Activated CD8-positive, alpha-beta T cell treated with anti-CD3 and anti-CD28 coated beads, Interleukin-2, amount 10 ng/mL, durations not matched to agents 7 days and 5 days (primary cell): ENCODE measurements at regions of chr1 and their contacts with region 1.

Region 1: GRCh38 chr1:175124861-175125260 is 57.2 kb downstream of the TNN start:
- DNase-seq: no peak
- ATAC-seq: no peak
- H3K4me3 Mint-ChIP-seq: no peak overlapping the region
- H3K27ac Mint-ChIP-seq: no peak overlapping the region
- H3K4me1 Mint-ChIP-seq: no peaks in the 10 kb centered on the region
- H3K27me3 Mint-ChIP-seq: no peaks in the 10 kb centered on the region

Region 2: GRCh38 chr1:174800216-174800851 is 324.5 kb before region 1 on chr1:
- CTCF ChIA-PET with region 1: no interaction called
- POLR2A ChIA-PET with region 1: no interaction called
- DNase-seq: peak; percentile 23
- ATAC-seq: peak; percentile 24
- H3K4me3 Mint-ChIP-seq: no peak overlapping the region
- H3K27ac Mint-ChIP-seq: no peak overlapping the region
- H3K4me1 Mint-ChIP-seq: peaks cover 5% of the 10 kb centered on the region
- H3K27me3 Mint-ChIP-seq: no peaks in the 10 kb centered on the region

Region 3: DNA sequence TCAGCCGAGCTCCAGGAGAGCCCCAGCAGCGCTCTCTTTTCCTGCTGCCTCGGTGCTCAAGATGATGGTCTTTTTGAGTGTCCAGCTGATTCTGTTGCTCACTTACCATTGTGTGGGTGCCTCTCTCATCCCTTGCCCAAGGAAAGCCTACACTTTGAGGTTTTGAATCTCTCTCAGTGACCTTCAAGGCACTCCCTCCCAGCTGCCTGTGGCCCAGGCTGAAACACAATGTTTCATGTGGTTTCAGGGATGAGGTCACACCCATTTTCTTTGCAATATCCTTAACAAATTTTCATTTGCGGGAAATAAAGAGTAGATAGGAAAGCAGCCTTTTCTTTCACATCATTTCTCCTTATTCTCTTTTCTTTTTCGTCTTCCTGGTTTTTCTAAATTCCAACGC is 89.0 kb before region 1 on chr1:
- CTCF ChIA-PET with region 1: interaction called, 32 read pairs
- POLR2A ChIA-PET with region 1: no interaction called
- DNase-seq: no peak
- ATAC-seq: no peak
- H3K4me3 Mint-ChIP-seq: no peak overlapping the region
- H3K27ac Mint-ChIP-seq: no peak overlapping the region
- H3K4me1 Mint-ChIP-seq: no peaks in the 10 kb centered on the region
- H3K27me3 Mint-ChIP-seq: peaks cover 6% of the 10 kb centered on the region

Region 4: DNA sequence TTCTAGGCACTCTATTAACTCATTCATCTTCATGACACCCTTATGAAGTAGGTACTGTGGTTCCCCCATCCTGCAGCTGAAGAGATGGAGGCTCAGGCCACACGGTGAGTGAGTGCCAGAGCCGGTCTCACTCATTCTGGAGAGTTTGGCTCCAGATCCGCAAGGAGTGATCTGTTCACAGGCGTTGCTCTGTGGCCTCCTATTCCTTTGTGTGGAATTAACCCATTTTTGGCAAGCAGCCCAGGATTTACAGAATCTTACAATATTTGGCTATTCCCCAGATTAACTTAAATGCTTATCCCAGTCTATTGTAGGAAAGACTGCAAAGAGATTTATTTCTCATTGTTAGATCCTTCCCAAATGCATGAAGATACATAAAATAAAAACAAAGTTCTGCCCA is 38.1 kb after region 1 on chr1:
- CTCF ChIA-PET with region 1: no interaction called
- POLR2A ChIA-PET with region 1: no interaction called
- DNase-seq: no peak
- ATAC-seq: no peak
- H3K4me3 Mint-ChIP-seq: no peak overlapping the region
- H3K27ac Mint-ChIP-seq: no peak overlapping the region
- H3K4me1 Mint-ChIP-seq: peaks cover 17% of the 10 kb centered on the region
- H3K27me3 Mint-ChIP-seq: no peaks in the 10 kb centered on the region